Activated T-helper 1 cell treated with anti-CD3 and anti-CD28 coated beads, Interleukin-12 subunit alpha, Interleukin-12 subunit beta, Interleukin-2, Interleukin-4 antibody, amounts not matched to agents 30 ng/mL and 10 ng/mL and 1 ng/mL, durations not matched to agents 14 hours and 24 hours and 36 hours (primary cell): ENCODE measurements at regions of chr15 and their contacts with region 1.

Region 1: GRCh38 chr15:78437762-78438302 is at the start of gene IREB2:
- DNase-seq: peak; percentile 98
- H3K4me3 Mint-ChIP-seq: peak within 1 kb of the TSS; percentile 90
- H3K27ac Mint-ChIP-seq: peak within 1 kb of the TSS; percentile 96
- H3K4me1 Mint-ChIP-seq: peaks cover 38% of the 10 kb centered on the region
- H3K27me3 Mint-ChIP-seq: peaks cover 4% of the 10 kb centered on the region
- total RNA-seq, gene IREB2: 98.0 and 103 TPM in 2 replicates

Region 2: DNA sequence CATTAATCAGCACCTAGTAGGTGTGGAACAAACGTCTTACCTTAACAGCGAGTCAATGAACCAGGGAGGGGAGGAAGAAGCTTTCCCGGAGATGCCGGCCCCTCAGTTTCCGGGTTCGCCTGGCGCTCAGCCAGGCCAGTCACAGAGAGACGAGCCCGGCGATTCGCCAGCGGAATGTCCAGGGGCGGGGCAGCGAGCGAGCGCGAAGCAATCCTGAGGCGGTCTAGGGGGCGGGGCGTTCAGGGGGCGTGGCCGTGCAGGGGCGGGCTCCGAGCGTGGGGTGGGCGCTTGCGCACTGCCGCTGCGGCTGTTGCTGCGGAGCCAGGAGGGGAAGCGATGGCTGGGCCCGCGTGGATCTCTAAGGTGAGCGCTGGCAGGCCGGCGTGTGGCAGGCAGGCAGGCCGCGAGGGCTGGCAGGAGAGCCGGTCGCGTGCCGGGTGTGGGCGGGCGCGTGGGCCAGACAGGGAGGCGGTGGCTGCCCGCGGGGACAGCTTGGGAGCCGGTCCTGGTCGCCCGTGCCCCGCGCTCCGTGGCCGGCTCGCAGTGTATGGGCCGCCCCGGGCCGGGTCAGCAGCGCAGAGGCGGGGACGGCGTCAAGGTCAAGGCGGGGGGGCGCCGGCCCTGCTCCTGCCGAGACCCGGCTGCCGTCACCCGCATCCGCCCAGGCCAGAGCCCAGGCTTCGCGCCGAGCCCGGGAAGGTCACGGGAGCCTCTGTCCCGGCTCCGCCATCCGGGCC is 288.6 kb before region 1 on chr15 and contains the start of gene IDH3A:
- intact Hi-C with region 1: loop called (anchors 5 kb)
- DNase-seq: peak; percentile 99
- H3K4me3 Mint-ChIP-seq: peak within 1 kb of the TSS; percentile 94
- H3K27ac Mint-ChIP-seq: peak within 1 kb of the TSS; percentile 89
- H3K4me1 Mint-ChIP-seq: peaks cover 41% of the 10 kb centered on the region
- H3K27me3 Mint-ChIP-seq: no peaks in the 10 kb centered on the region
- total RNA-seq, gene IDH3A: 160 and 163 TPM in 2 replicates

Region 3: DNA sequence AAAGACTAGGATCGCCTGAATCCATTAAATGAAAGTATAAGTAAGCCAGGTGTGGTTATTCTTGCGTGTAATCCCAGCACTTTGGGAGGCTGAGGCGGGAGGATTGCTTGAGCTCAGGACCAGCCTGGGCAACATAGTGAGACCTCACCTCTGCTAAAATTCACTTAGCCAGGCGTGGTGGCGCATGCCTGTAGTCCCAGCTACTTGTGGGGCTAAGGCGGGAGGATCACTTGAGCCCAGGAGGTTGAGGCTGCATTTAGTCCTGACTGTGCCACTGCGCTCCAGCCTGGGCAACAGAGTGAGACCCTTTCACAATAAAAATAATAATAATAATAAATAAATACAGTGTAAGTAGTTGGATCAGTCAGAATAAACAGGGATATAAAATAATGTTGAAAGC is 44.1 kb after region 1 on chr15:
- intact Hi-C with region 1: loop called (anchors 5 kb)
- DNase-seq: no peak
- H3K4me3 Mint-ChIP-seq: no peak overlapping the region
- H3K27ac Mint-ChIP-seq: no peak overlapping the region
- H3K4me1 Mint-ChIP-seq: no peaks in the 10 kb centered on the region
- H3K27me3 Mint-ChIP-seq: no peaks in the 10 kb centered on the region

Region 4: GRCh38 chr15:78540141-78540928 is 102.5 kb after region 1 on chr15 and contains the start of gene PSMA4:
- intact Hi-C with region 1: loop called (anchors 1 kb)
- DNase-seq: peak; percentile 92
- H3K4me3 Mint-ChIP-seq: peak within 1 kb of the TSS; percentile 97
- H3K27ac Mint-ChIP-seq: peak within 1 kb of the TSS; percentile 100
- H3K4me1 Mint-ChIP-seq: peaks cover 42% of the 10 kb centered on the region
- H3K27me3 Mint-ChIP-seq: no peaks in the 10 kb centered on the region
- total RNA-seq, gene PSMA4: 317 and 318 TPM in 2 replicates

Region 5: GRCh38 chr15:79310983-79311900 is 873.4 kb after region 1 on chr15 and contains the start of gene TMED3:
- intact Hi-C with region 1: loop called (anchors 1 kb)
- DNase-seq: peak; percentile 82
- H3K4me3 Mint-ChIP-seq: peak within 1 kb of the TSS; percentile 95
- H3K27ac Mint-ChIP-seq: peak within 1 kb of the TSS; percentile 68
- H3K4me1 Mint-ChIP-seq: peaks cover 38% of the 10 kb centered on the region
- H3K27me3 Mint-ChIP-seq: peaks cover 27% of the 10 kb centered on the region
- total RNA-seq, gene TMED3: 60.8 and 63.4 TPM in 2 replicates